GM12878 (cell line): ENCODE measurements at regions of chr6 and their contacts with region 1.

Region 1: GRCh38 chr6:79466207-79466834 is 70.9 kb downstream of the LCA5 start:
- DNase-seq: no peak
- ATAC-seq: peak; percentile 53
- H3K4me3 ChIP-seq: no peak overlapping the region
- H3K27ac ChIP-seq: no peak overlapping the region
- H3K4me1 ChIP-seq: no peaks in the 10 kb centered on the region
- H3K27me3 ChIP-seq: no peaks in the 10 kb centered on the region
- CTCF ChIP-seq: peak; percentile 38 to 63 (median 45); a peak in 4 of 6 replicates
- EP300 ChIP-seq: no peak
- POLR2A ChIP-seq: no peak
- RAD21 ChIP-seq: peak; percentile 73

Region 2: DNA sequence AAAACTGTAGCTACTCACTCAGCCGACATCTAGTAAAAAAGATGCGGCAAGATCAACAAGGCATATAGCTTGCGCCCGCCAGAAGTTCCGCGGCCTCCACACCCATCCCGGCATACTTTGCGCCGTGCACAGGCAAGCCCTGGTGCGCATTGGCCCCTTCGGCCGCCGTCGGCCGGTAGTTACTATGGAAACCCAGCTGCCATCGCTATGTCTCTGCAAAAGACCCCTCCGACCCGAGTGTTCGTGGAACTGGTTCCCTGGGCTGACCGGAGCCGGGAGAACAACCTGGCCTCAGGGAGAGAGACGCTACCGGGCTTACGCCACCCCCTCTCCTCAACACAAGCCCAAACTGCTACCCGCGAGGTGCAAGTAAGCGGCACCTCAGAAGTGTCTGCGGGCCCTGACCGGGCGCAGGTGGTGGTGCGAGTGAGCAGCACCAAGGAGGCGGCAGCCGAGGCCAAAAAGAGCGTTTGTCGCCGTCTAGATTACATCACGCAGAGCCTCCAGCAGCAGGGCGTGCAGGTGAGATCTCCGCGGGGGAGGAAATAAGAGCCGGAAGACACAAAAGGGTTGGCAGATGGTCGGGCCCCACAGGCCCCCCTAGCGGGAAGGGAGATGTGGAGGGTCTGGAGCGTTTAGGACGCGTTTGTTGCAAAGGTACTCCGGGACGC is 598.8 kb before region 1 on chr6 and contains the start of gene IRAK1BP1:
- CTCF ChIA-PET with region 1: no interaction called
- POLR2A ChIA-PET with region 1: no interaction called
- RAD21 ChIA-PET with region 1: no interaction called
- SMC1A ChIA-PET with region 1: no interaction called
- in situ Hi-C with region 1: no loop called
- intact Hi-C with region 1: loop called (anchors 10 kb)
- DNase-seq: peak; percentile 49
- ATAC-seq: peak; percentile 98
- H3K4me3 ChIP-seq: peak within 1 kb of the TSS; percentile 90
- H3K27ac ChIP-seq: peak within 1 kb of the TSS; percentile 90
- H3K4me1 ChIP-seq: no peaks in the 10 kb centered on the region
- H3K27me3 ChIP-seq: no peaks in the 10 kb centered on the region
- CTCF ChIP-seq: peak in 2 of 3 experiments; percentile 14 to 25; a peak in 2 of 6 replicates
- EP300 ChIP-seq: no peak
- POLR2A ChIP-seq: peak; percentile 80
- RAD21 ChIP-seq: no peak
- polyA plus RNA-seq, gene IRAK1BP1: 2.3 to 2.6 TPM

Region 3: DNA sequence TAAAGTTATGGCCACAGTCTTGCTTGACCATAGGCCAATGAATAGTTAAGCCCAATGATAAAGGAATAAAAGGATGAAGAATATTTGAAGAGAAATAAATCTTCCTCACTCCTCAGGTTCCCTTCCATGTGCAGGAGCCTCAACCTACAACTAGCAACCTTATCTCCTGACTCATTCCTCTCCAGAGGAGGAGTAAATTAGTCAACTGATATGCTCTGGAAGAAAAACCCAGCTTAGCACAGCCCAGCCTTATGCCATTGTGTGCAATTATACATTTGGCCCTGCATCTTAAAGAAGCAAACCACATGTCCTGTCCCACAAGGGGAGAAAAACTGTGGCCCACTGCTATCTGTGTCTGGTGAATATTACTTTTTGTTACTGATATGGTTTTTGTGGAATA is 470.4 kb before region 1 on chr6:
- CTCF ChIA-PET with region 1: no interaction called
- POLR2A ChIA-PET with region 1: no interaction called
- RAD21 ChIA-PET with region 1: no interaction called
- SMC1A ChIA-PET with region 1: no interaction called
- in situ Hi-C with region 1: no loop called
- intact Hi-C with region 1: loop called (anchors 10 kb)
- DNase-seq: no peak
- ATAC-seq: no peak
- H3K4me3 ChIP-seq: no peak overlapping the region
- H3K27ac ChIP-seq: no peak overlapping the region
- H3K4me1 ChIP-seq: no peaks in the 10 kb centered on the region
- H3K27me3 ChIP-seq: no peaks in the 10 kb centered on the region
- CTCF ChIP-seq: no peak
- EP300 ChIP-seq: no peak
- POLR2A ChIP-seq: no peak
- RAD21 ChIP-seq: no peak

Region 4: DNA sequence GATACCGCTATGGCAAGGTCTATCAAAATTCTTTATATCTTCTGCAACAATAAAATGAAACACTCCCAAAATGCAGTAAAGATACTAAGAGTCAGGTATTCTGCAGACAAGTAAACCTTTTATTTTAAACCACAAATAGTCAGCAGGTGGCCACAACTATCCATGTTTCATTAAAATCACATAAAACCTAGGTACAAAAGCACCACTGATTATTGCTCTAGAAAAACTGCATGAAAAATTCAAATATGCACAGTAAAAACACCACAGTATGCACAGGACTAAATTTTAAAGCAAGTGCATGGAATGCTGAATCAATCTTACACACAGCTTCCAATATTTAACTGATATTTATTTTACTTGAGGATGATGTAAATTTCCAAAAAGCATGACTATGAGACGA is 265.2 kb before region 1 on chr6:
- CTCF ChIA-PET with region 1: no interaction called
- POLR2A ChIA-PET with region 1: no interaction called
- RAD21 ChIA-PET with region 1: no interaction called
- SMC1A ChIA-PET with region 1: no interaction called
- in situ Hi-C with region 1: no loop called
- intact Hi-C with region 1: loop called (anchors 10 kb)
- DNase-seq: no peak
- ATAC-seq: no peak
- H3K4me3 ChIP-seq: no peak overlapping the region
- H3K27ac ChIP-seq: no peak overlapping the region
- H3K4me1 ChIP-seq: no peaks in the 10 kb centered on the region
- H3K27me3 ChIP-seq: no peaks in the 10 kb centered on the region
- CTCF ChIP-seq: no peak
- EP300 ChIP-seq: no peak
- POLR2A ChIP-seq: no peak
- RAD21 ChIP-seq: 0 out of 2 replicates have a peak, but pooled peaks have one; percentile 7

Region 5: DNA sequence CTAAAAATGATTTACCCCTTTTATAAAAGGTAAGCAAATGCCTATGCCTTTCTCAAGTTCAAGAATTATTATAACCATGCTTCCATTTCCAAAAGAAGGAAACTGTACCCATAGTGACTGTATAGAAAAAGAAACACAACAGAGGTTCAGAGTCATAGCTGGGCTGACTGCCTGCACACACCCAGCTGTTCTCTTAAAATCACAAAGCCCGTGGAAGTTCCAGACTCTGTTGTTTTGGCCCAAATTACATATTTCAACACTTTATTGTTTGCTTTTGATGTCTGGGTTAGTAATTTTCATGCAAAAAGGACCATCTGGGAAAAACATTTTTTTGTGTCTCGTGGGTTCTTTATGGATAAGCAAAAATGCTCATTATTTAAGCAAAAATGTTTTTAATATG is 28.3 kb before region 1 on chr6:
- CTCF ChIA-PET with region 1: no interaction called
- POLR2A ChIA-PET with region 1: no interaction called
- RAD21 ChIA-PET with region 1: no interaction called
- SMC1A ChIA-PET with region 1: no interaction called
- in situ Hi-C with region 1: no loop called
- intact Hi-C with region 1: no loop called
- DNase-seq: no peak
- ATAC-seq: no peak
- H3K4me3 ChIP-seq: no peak overlapping the region
- H3K27ac ChIP-seq: no peak overlapping the region
- H3K4me1 ChIP-seq: no peaks in the 10 kb centered on the region
- H3K27me3 ChIP-seq: no peaks in the 10 kb centered on the region
- CTCF ChIP-seq: no peak
- EP300 ChIP-seq: no peak
- POLR2A ChIP-seq: no peak
- RAD21 ChIP-seq: no peak

Region 6: DNA sequence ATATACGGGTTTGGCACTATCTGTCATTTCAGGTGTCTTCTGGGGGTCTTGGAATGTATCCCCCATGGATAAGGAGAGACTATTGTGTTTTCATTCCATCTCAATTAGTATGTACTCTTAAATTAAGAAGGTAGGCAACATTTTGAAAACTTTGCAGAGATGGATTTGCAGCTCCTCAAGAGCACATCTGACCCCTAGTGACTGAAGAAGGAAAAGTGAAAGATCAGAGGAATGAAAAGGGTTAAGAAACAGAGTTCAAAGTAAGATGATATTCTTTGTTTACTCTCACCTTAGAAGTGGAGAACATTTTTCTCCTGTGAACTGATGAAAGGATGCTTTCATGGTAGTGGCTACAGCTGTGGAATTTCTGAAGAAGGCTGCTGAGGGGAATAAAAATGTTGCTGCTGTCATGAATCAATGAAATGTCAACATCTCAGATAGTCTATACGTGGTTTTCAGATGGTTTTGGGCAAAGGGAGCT is 206.3 kb after region 1 on chr6:
- CTCF ChIA-PET with region 1: no interaction called
- POLR2A ChIA-PET with region 1: no interaction called
- RAD21 ChIA-PET with region 1: no interaction called
- SMC1A ChIA-PET with region 1: no interaction called
- in situ Hi-C with region 1: no loop called
- intact Hi-C with region 1: no loop called
- DNase-seq: no peak
- ATAC-seq: peak; percentile 69
- H3K4me3 ChIP-seq: no peak overlapping the region
- H3K27ac ChIP-seq: no peak overlapping the region
- H3K4me1 ChIP-seq: no peaks in the 10 kb centered on the region
- H3K27me3 ChIP-seq: no peaks in the 10 kb centered on the region
- CTCF ChIP-seq: peak; percentile 27 to 55 (median 52); a peak in 5 of 6 replicates
- EP300 ChIP-seq: no peak
- POLR2A ChIP-seq: no peak
- RAD21 ChIP-seq: peak; percentile 77

Region 7: GRCh38 chr6:80438772-80439171 is 972.5 kb after region 1 on chr6:
- CTCF ChIA-PET with region 1: no interaction called
- POLR2A ChIA-PET with region 1: no interaction called
- RAD21 ChIA-PET with region 1: no interaction called
- SMC1A ChIA-PET with region 1: no interaction called
- in situ Hi-C with region 1: no loop called
- intact Hi-C with region 1: no loop called
- DNase-seq: no peak
- ATAC-seq: no peak
- H3K4me3 ChIP-seq: no peak overlapping the region
- H3K27ac ChIP-seq: no peak overlapping the region
- H3K4me1 ChIP-seq: no peaks in the 10 kb centered on the region
- H3K27me3 ChIP-seq: no peaks in the 10 kb centered on the region
- CTCF ChIP-seq: no peak
- EP300 ChIP-seq: no peak
- POLR2A ChIP-seq: no peak
- RAD21 ChIP-seq: no peak